Posterior vena cava (tissue), 2 donors: ENCODE measurements at regions of chr20 and their contacts with region 1.

Region 1: GRCh38 chr20:9503526-9504245 is 10.7 kb upstream of the LAMP5 start:
- DNase-seq: no peak

Region 2: DNA sequence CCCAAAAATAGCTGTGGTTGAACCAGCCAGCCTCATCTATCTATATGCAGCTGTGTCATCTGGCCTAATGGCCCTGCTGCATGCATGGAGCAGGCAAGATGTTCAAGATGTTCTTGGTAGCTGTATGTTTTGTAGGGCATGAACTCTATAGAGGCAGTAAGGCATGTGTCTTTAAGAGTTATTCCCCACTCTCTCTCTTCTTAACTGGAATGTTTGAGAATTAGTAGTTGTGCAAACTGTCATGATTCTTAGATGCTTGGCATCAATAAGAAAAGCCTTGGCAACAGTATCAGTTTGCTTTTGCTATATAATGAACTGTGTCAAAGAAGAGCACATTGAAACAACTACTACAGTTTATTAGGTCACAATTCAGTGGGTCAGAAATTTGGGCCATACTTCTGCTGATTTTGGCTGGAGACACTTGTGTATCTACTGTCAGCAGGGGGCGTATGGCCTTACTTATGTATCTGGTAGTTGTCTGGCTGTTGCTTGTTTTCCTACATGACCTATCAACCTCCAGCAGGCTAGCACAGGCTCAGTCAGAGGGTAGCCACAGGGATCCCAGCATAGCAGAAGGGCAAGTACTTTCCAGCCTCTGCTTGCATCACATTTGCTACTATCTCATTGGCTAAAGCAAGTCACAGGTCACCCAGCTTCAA is 45.4 kb before region 1 on chr20:
- intact Hi-C with region 1: no loop called
- DNase-seq: no peak

Region 3: GRCh38 chr20:9517297-9518162 is 13.8 kb after region 1 on chr20:
- intact Hi-C with region 1: loop called in 1 of 2 experiments (anchors 1 kb)
- DNase-seq: no peak

Region 4: GRCh38 chr20:9581509-9581908 is 77.8 kb after region 1 on chr20:
- intact Hi-C with region 1: loop called in 1 of 2 experiments (anchors 1 kb)
- DNase-seq: no peak